Natural killer cell (primary cell): ENCODE measurements at regions of chr9 and their contacts with region 1.

Region 1: DNA sequence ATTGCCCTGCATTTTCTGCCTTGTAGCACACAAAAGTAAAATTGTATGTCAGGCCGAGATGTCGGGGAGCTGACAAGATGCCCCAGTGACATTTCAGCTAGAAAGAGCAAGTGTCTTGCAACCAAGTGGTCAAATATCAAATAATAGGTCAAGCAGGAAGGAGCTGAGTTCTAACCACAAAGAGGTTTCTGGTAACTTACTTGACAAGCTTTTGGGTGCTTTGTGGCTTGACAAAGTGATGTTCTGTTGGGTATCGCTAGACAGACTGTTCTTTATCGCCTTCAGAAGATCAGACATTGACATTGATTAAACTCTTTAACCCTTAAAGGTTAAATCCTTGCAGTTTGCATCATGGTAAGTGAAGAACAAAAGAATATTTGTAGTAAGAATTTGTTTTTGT is 419.9 kb downstream of the CCDC171 start:
- DNase-seq: no peak
- ATAC-seq: no peak
- H3K4me3 ChIP-seq: no peak overlapping the region
- H3K4me3 Mint-ChIP-seq: no peak overlapping the region
- H3K27ac ChIP-seq: no peak overlapping the region
- H3K27ac Mint-ChIP-seq: no peak overlapping the region
- H3K4me1 ChIP-seq: no peaks in the 10 kb centered on the region
- H3K4me1 Mint-ChIP-seq: peaks cover 0 to 9% of the 10 kb centered on the region in 2 donors
- H3K27me3 ChIP-seq: peaks cover 4% of the 10 kb centered on the region
- H3K27me3 Mint-ChIP-seq: peaks cover 11 to 17% of the 10 kb centered on the region in 2 donors
- CTCF ChIP-seq: no peak

Region 2: GRCh38 chr9:15959663-15960062 is 13.1 kb before region 1 on chr9:
- intact Hi-C with region 1: loop called (anchors 1 kb)
- DNase-seq: no peak
- ATAC-seq: no peak
- H3K4me3 ChIP-seq: no peak overlapping the region
- H3K4me3 Mint-ChIP-seq: no peak overlapping the region
- H3K27ac ChIP-seq: no peak overlapping the region
- H3K27ac Mint-ChIP-seq: no peak overlapping the region
- H3K4me1 ChIP-seq: no peaks in the 10 kb centered on the region
- H3K4me1 Mint-ChIP-seq: no peaks in the 10 kb centered on the region
- H3K27me3 ChIP-seq: no peaks in the 10 kb centered on the region
- H3K27me3 Mint-ChIP-seq: peaks cover 0 to 5% of the 10 kb centered on the region in 2 donors
- CTCF ChIP-seq: no peak